ENCODE measurements at regions of chr4 and their contacts with region 1.

Region 1: GRCh38 chr4:140359562-140360427 is 13.7 kb upstream of the SCOC start:
- DNase-seq: peak; percentile 59
- ATAC-seq: peak; percentile 90

Region 2: DNA sequence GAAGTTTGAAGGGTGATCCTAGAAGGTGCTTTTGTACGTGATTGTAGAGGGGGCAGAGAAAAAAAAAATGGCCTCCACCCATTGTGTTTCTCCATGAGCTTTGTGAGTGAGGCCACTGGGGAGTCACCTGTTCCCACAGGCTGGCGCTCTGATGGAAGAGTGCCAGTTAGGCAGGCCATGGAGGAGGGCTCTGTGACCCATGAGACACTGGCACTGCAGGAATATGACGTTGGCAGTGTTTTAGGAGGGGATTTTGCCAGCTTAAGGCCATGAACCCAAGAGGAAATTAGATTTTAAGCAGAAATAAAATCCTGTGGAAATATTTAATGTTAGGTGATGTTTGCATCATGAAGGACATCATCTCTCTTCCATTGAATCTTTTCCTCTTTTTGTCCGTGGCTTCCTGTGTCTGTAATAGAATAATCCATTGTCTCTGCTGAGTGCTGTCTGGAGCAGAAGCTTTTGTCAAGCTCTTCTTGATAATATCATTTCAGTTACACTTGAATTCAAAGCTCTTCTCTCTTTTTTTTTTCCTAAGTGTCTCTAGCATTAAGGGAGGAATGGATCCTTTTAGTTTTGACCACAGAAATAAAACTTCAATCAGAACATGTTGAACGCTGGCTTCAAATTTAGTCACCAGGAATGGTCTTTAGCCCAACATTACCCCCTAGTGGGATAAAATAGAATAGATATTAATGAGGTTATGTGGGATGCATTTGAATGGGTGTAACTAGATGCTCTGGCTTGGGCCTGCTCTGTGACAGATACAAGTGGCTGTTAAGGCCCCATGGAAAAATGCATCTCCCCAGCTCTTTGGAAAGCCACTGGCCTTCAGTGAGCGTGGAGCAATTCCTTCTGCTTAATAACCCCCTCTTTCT is 250.0 kb after region 1 on chr4:
- intact Hi-C with region 1: loop called (anchors 5 kb)
- DNase-seq: no peak
- ATAC-seq: peak; percentile 80

Region 3: GRCh38 chr4:140673729-140674128 is 313.9 kb after region 1 on chr4:
- intact Hi-C with region 1: no loop called
- DNase-seq: no peak
- ATAC-seq: no peak

Region 4: DNA sequence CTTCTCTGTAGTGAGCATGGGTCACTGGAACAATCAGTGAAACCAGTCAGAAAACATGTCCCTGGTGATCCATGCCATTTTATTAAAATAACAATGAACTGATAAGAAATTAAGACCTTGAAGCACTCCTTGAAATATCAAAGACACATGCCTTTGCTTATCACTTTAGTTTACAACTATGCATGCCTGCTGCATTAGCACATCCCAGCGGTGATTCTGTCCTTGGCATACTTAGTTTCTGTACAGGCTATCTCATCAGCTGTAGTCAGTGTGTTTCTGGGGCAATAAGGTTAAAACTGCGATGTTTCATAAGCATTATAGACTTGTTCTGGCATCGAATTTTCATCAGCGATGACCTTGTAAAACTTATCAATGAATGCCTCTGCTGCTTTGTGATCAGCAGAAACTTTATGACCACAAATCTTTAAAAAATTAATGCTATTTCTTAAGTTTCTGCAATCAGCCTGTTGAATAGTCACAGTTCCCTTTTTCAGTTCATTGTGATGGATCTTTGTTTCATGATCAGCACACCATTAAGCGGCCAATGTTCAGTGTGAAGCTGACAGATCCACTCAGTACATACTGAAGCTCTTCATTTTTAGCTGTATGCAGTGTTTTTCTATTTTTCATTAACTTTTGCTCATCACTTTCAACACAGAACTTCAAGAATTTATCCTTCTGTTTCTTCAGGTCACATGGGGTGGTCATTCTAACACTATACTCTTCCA is 623.0 kb after region 1 on chr4:
- intact Hi-C with region 1: no loop called
- DNase-seq: no peak
- ATAC-seq: peak; percentile 82

Measured in left ventricle myocardium superior (tissue), 1 donor.